ENCODE measurements at regions of chr7 and their contacts with region 1.

Region 1: GRCh38 chr7:37448636-37449361 is at the start of gene ELMO1:
- DNase-seq: peak; percentile 81
- H3K4me3 Mint-ChIP-seq: peak within 1 kb of the TSS; percentile 94
- H3K27ac Mint-ChIP-seq: peak within 1 kb of the TSS; percentile 95
- H3K4me1 Mint-ChIP-seq: peaks cover 45% of the 10 kb centered on the region
- H3K27me3 Mint-ChIP-seq: no peaks in the 10 kb centered on the region
- total RNA-seq, gene ELMO1: 129 to 137 TPM

Region 2: GRCh38 chr7:35694781-35695472 is 1753.9 kb before region 1 on chr7 and contains the start of gene HERPUD2:
- CTCF ChIA-PET with region 1: no interaction called
- intact Hi-C with region 1: loop called (anchors 10 kb)
- DNase-seq: peak; percentile 92
- H3K4me3 Mint-ChIP-seq: peak within 1 kb of the TSS; percentile 94
- H3K27ac Mint-ChIP-seq: peak within 1 kb of the TSS; percentile 96
- H3K4me1 Mint-ChIP-seq: peaks cover 35% of the 10 kb centered on the region
- H3K27me3 Mint-ChIP-seq: no peaks in the 10 kb centered on the region
- total RNA-seq, gene HERPUD2: 20.3 to 22.4 TPM

Region 3: DNA sequence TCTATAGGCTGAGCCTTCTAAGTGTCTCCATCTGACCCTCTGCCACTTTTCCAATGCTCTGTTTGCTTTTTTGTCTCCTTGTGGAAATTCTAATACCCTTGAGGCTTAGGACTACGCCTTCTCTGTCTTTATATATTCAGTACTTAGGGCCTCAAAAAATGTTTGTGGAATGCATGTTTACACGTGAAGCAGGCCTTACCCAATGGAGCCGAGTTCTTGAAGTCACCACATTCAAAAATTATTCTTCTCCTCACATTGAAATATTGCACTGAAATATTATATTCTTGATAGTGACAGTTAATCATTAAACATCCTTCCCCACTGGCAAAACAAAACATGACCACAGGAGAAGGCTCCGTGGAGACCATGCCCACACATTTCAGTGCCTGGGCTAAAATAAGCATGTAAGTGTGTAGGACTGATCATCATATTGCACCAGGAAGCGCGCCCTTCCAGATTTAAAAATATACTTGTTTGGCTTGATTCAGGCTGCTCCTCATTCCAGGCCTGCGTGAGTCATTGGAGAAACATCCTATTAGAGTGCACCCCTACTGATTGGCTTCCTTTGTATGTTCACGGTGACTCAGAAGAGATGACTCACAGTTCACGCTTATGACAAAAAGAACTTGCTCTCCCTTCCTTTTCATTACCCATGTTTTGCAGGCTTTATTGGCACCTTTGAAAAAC is 417.1 kb before region 1 on chr7:
- CTCF ChIA-PET with region 1: no interaction called
- intact Hi-C with region 1: loop called (anchors 1 kb)
- DNase-seq: peak; percentile 79
- H3K4me3 Mint-ChIP-seq: no peak overlapping the region
- H3K27ac Mint-ChIP-seq: peak overlapping the region; percentile 50
- H3K4me1 Mint-ChIP-seq: peaks cover 60% of the 10 kb centered on the region
- H3K27me3 Mint-ChIP-seq: no peaks in the 10 kb centered on the region

Region 4: DNA sequence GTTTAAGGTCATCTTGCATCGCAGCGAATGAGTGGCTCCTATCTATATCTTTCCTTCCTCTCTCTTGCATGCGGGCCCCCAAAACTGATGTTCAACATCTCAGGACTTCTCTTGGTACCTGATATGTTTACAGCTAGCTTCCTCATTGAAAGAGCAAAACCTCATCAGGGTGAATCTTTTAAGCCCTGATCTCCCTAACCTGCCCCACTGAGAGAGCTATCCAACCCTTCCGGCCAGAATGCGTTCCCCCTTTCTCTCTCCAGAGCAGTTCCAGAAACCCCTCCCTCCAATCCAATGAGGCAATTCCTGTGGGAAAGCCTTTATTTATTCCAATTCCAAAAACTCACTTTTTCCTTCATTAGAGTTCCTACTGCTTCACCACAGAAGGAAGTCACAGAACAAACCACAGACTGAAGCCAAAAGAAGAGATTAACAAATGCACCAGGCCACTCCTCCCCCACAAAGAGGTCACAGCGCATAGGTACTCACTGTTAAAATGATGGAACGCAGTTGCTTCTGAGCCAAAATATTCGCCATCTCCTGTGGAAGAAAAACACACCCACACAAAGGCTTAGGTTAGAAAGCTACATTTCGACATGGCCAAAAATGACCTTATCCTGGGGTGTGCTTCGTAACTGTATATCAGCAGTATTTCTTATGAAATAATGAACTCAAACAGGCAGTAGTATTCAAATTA is 232.5 kb before region 1 on chr7:
- CTCF ChIA-PET with region 1: no interaction called
- intact Hi-C with region 1: no loop called
- DNase-seq: no peak
- H3K4me3 Mint-ChIP-seq: no peak overlapping the region
- H3K27ac Mint-ChIP-seq: no peak overlapping the region
- H3K4me1 Mint-ChIP-seq: peaks cover 25% of the 10 kb centered on the region
- H3K27me3 Mint-ChIP-seq: no peaks in the 10 kb centered on the region

Region 5: GRCh38 chr7:37342688-37343471 is 105.9 kb before region 1 on chr7:
- CTCF ChIA-PET with region 1: interaction called, 7 read pairs
- intact Hi-C with region 1: loop called (anchors 1 kb)
- DNase-seq: peak; percentile 86
- H3K4me3 Mint-ChIP-seq: peak overlapping the region; percentile 89
- H3K27ac Mint-ChIP-seq: peak overlapping the region; percentile 97
- H3K4me1 Mint-ChIP-seq: peaks cover 81% of the 10 kb centered on the region
- H3K27me3 Mint-ChIP-seq: no peaks in the 10 kb centered on the region

Region 6: DNA sequence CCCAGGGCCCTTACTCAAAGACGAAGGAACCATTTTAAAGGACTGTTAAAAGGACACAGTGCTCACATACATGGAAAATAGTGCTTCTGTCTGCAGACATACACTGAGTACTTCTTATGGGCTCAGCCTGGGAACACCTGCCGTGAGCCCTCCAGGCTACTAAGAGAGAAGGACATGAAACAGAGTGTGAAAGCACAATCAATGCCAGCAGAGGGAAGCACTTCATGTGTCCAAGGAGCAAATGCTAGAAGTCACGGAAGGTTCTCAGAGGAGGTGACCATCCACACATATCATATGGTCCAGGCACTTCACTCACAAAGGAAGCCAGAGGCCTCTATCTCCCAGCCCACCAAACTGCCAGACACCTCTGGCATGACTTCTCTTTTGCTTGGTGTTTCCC is 15.6 kb before region 1 on chr7:
- CTCF ChIA-PET with region 1: interaction called, 3 read pairs
- intact Hi-C with region 1: loop called (anchors 1 kb)
- DNase-seq: no peak
- H3K4me3 Mint-ChIP-seq: no peak overlapping the region
- H3K27ac Mint-ChIP-seq: peak overlapping the region; percentile 85
- H3K4me1 Mint-ChIP-seq: peaks cover 96% of the 10 kb centered on the region
- H3K27me3 Mint-ChIP-seq: no peaks in the 10 kb centered on the region

Region 7: GRCh38 chr7:38178004-38178694 is 729.4 kb after region 1 on chr7 and contains the start of gene STARD3NL:
- CTCF ChIA-PET with region 1: no interaction called
- intact Hi-C with region 1: loop called (anchors 5 kb)
- DNase-seq: peak; percentile 96
- H3K4me3 Mint-ChIP-seq: peak within 1 kb of the TSS; percentile 94
- H3K27ac Mint-ChIP-seq: peak within 1 kb of the TSS; percentile 91
- H3K4me1 Mint-ChIP-seq: peaks cover 33% of the 10 kb centered on the region
- H3K27me3 Mint-ChIP-seq: peaks cover 9% of the 10 kb centered on the region
- total RNA-seq, gene STARD3NL: 23.7 to 25.7 TPM